Activated naive CD4-positive, alpha-beta T cell treated with anti-CD3 and anti-CD28 coated beads for 36 hours (primary cell): ENCODE measurements at regions of chr11 and their contacts with region 1.

Region 1: GRCh38 chr11:72585762-72586311 is 88.4 kb downstream of the PDE2A start:
- DNase-seq: peak; percentile 82
- H3K4me3 Mint-ChIP-seq: peak overlapping the region; percentile 75
- H3K27ac Mint-ChIP-seq: no peak overlapping the region
- H3K4me1 Mint-ChIP-seq: peaks cover 25% of the 10 kb centered on the region
- H3K27me3 Mint-ChIP-seq: peaks cover 16% of the 10 kb centered on the region

Region 2: GRCh38 chr11:72471005-72471898 is 114.6 kb before region 1 on chr11:
- CTCF ChIA-PET with region 1: interaction called, 10 read pairs
- intact Hi-C with region 1: no loop called
- DNase-seq: peak; percentile 73
- H3K4me3 Mint-ChIP-seq: peak overlapping the region; percentile 32
- H3K27ac Mint-ChIP-seq: no peak overlapping the region
- H3K4me1 Mint-ChIP-seq: peaks cover 2% of the 10 kb centered on the region
- H3K27me3 Mint-ChIP-seq: peaks cover 19% of the 10 kb centered on the region

Region 3: DNA sequence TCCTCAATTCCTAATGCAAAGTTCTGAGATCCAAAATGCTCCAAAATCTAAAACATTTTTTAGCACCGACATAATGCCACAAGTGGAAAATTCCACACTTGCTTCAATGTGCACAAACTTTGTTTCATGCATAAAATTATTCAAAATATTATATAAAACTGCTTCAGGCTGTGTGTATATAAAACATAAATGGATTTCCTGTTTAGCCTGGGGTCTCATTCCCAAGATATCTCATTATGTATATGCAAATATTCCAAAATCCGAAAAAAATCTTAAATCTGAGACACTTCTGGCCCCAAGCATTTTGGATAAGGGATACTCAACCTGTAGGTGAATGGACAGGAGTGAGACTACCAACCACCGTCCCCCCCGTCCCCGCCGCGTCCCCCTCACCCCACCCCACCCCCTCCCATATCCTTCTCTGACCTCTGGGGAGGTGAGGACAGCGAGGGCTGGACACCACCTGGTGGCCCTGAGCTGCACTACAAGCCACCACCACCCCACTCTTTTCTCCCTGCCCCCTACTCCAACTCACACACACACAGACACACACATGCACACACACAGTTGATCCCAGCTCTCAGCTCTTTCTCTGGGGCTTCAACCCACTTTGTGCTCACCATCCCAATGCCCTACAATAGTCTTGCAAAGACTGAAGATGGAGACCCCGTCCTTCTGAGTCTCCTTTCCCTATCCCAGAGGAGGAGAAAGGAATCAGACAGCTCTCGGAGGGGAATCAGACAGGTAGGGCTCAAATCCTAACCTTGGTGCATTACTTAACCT is 12.6 kb before region 1 on chr11:
- CTCF ChIA-PET with region 1: interaction called, 10 read pairs
- intact Hi-C with region 1: no loop called
- DNase-seq: peak; percentile 43
- H3K4me3 Mint-ChIP-seq: no peak overlapping the region
- H3K27ac Mint-ChIP-seq: no peak overlapping the region
- H3K4me1 Mint-ChIP-seq: no peaks in the 10 kb centered on the region
- H3K27me3 Mint-ChIP-seq: peaks cover 6% of the 10 kb centered on the region

Region 4: GRCh38 chr11:72635309-72635915 is 49.6 kb after region 1 on chr11:
- CTCF ChIA-PET with region 1: interaction called, 21 read pairs
- intact Hi-C with region 1: no loop called
- DNase-seq: no peak
- H3K4me3 Mint-ChIP-seq: no peak overlapping the region
- H3K27ac Mint-ChIP-seq: no peak overlapping the region
- H3K4me1 Mint-ChIP-seq: peaks cover 2% of the 10 kb centered on the region
- H3K27me3 Mint-ChIP-seq: peaks cover 2% of the 10 kb centered on the region

Region 5: GRCh38 chr11:72668611-72669347 is 82.9 kb after region 1 on chr11:
- CTCF ChIA-PET with region 1: interaction called, 11 read pairs
- intact Hi-C with region 1: no loop called
- DNase-seq: peak; percentile 35
- H3K4me3 Mint-ChIP-seq: no peak overlapping the region
- H3K27ac Mint-ChIP-seq: no peak overlapping the region
- H3K4me1 Mint-ChIP-seq: no peaks in the 10 kb centered on the region
- H3K27me3 Mint-ChIP-seq: peaks cover 54% of the 10 kb centered on the region

Region 6: DNA sequence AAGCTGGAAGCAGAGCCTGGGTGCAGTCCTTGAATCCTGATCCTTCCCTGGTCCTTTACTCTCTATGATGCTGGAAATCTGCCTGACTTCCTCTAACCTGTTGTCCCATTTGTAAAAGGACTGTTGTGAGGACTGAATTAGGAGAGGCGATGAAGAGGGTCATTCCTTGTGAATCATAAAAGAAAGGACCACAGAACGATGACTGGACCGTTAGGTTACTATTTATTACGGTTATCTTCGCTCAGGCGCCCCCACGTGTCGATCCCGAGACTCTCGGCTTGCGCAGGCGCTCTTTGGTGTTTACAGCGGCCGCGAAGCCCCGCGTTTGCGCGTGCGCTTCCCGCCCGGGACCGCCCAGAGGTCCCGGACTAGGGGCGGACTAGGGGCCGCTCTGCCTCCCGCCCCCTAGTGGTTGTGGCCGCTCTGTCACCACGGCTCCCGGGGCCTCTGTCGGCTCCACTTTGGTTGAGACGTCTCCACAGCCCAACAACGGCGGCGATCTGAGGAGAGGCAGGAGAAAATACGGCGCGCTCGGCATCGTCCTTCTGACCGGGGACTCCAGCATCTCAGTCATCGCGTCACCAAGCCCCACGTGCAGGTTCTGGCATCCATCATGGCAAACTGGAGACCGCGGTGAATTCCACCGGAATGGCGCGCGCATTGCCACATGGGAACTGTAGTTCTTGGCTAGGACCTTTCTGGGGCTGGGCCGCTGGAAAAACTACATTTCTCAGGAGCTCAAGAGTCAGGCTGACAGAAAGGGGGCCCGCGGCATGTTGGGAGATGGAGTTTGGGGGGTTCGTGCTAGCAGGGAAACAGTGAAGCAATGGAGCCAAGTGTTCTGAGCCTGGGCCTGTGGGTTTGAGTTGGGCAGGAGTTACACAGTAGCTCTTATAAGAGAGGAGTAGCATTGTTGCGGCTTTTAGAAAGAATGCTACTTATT is 207.9 kb after region 1 on chr11 and contains the start of gene STARD10:
- CTCF ChIA-PET with region 1: no interaction called
- intact Hi-C with region 1: loop called (anchors 5 kb)
- DNase-seq: peak; percentile 97
- H3K4me3 Mint-ChIP-seq: peak within 1 kb of the TSS; percentile 100
- H3K27ac Mint-ChIP-seq: peak within 1 kb of the TSS; percentile 100
- H3K4me1 Mint-ChIP-seq: peaks cover 29% of the 10 kb centered on the region
- H3K27me3 Mint-ChIP-seq: no peaks in the 10 kb centered on the region
- total RNA-seq, gene STARD10: 11.9 to 12.0 TPM